ENCODE measurements at regions of chr11 and their contacts with region 1.

Region 1: GRCh38 chr11:76919887-76920746 is 59.4 kb downstream of the ACER3 start:
- DNase-seq: peak; percentile 64
- H3K4me3 ChIP-seq: peak overlapping the region in 1 of 3 experiments; percentile 2
- H3K27ac ChIP-seq: no peak overlapping the region
- H3K4me1 ChIP-seq: no peaks in the 10 kb centered on the region
- H3K27me3 ChIP-seq: no peaks in the 10 kb centered on the region
- CTCF ChIP-seq: peak; percentile 89 to 92

Region 2: DNA sequence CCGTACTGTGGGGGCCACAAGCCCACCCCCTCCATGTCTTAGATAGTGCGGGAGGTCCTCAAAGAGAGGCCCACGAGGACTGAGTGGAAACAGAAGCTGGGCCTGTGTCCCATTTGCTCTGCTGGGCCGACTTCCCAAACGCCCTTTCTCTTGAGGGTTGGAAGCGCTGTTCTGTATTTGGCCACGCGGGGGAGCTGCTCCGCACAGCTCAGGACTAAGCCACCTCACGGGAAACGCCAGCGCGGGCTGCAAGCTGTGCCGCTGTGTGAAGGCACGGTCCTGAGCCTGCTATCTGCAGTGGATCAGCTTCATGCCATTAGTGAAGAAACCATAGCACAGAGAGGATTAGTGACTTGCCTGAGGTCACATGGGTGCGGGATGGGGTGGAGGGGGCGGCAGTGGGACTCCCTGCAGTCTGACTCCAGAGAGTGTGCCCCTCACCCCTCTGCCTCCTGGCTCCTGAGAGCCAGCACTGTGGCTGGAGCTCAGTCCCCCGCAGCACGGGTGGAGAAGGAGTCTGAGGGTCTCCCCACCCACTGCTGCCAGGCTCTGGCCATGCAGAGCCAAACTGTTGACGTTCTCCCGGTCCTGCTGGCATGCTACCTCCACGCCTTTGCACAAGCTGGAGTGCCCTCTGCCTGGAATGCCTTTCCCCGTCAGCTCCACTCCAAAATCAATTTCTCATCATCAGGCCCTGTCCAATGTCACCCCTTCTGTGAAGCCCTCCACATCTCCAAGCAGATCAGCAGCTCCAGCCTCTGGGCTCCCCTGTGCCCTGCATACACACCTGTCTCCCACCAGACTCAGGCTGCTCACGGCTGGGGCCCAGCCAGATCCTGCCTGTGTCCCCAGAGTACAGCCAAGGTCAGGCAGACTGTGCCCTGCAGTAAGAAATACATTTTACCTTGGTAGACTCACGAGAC is 198.1 kb before region 1 on chr11:
- CTCF ChIA-PET with region 1: no interaction called
- dilution Hi-C with region 1: no loop called
- in situ Hi-C with region 1: loop called in 1 of 2 experiments (anchors 10 kb)
- intact Hi-C with region 1: no loop called
- DNase-seq: peak; percentile 57
- H3K4me3 ChIP-seq: no peak overlapping the region
- H3K27ac ChIP-seq: no peak overlapping the region
- H3K4me1 ChIP-seq: no peaks in the 10 kb centered on the region
- H3K27me3 ChIP-seq: peaks cover 2% of the 10 kb centered on the region
- CTCF ChIP-seq: peak; percentile 80 to 95

Region 3: GRCh38 chr11:76734456-76735420 is 185.4 kb before region 1 on chr11:
- CTCF ChIA-PET with region 1: interaction called, 7 read pairs
- dilution Hi-C with region 1: no loop called
- in situ Hi-C with region 1: loop called in 1 of 2 experiments (anchors 10 kb)
- intact Hi-C with region 1: loop called (anchors 1 kb)
- DNase-seq: no peak
- H3K4me3 ChIP-seq: no peak overlapping the region
- H3K27ac ChIP-seq: no peak overlapping the region
- H3K4me1 ChIP-seq: no peaks in the 10 kb centered on the region
- H3K27me3 ChIP-seq: no peaks in the 10 kb centered on the region
- CTCF ChIP-seq: no peak

Region 4: GRCh38 chr11:76799066-76799804 is 120.9 kb before region 1 on chr11:
- CTCF ChIA-PET with region 1: interaction called, 4 read pairs
- dilution Hi-C with region 1: loop called (anchors 5 kb)
- in situ Hi-C with region 1: no loop called
- intact Hi-C with region 1: no loop called
- DNase-seq: peak; percentile 47
- H3K4me3 ChIP-seq: no peak overlapping the region
- H3K27ac ChIP-seq: no peak overlapping the region
- H3K4me1 ChIP-seq: peaks cover 14% of the 10 kb centered on the region
- H3K27me3 ChIP-seq: no peaks in the 10 kb centered on the region
- CTCF ChIP-seq: peak; percentile 65 to 93

Region 5: DNA sequence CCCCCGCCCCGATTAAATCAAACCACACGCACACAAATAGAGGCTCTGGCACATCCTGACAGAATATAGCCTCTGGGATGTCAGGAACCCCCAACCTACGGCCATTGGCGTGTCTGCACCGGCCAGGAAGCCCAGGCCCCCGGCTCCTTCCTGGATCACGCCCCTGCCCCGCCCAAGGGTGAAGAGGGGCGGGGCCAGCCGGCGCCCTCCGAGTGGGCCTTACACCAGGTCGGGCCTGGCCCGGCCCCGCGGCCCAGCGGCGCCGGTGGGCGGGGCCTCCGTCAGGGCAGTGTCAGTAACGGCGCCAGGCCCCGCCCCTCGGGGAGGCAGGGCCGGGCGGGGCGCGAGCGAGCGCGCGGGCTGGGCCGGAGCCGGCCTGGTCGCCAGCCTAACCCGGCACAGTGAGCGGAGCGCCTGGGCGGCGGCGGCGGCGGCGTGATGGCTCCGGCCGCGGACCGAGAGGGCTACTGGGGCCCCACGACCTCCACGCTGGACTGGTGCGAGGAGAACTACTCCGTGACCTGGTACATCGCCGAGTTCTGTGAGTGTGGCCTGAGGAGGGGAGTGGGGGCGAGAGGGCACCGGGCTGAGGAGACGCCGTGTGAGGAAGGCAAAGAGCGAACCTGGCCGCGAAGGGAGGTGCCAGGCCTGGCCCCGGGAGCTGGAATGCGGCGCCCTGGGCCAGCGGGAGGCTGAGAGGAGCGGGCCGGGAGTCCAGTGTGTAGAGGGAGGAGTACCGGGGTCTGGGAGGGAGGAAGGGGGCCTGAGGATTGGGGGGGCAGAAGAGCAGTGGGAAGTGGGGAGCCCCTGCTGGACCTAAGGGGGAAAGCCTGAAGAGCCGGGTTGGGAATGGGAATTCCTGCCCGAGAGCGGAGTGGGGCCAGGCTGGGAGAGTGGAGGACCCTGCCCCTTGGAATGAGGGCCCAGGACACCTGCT is 59.3 kb before region 1 on chr11 and contains the start of gene ACER3:
- CTCF ChIA-PET with region 1: no interaction called
- dilution Hi-C with region 1: no loop called
- in situ Hi-C with region 1: no loop called
- intact Hi-C with region 1: loop called (anchors 2 kb)
- DNase-seq: peak; percentile 87
- H3K4me3 ChIP-seq: peak within 1 kb of the TSS; percentile 54 to 84 (median 74)
- H3K27ac ChIP-seq: peak within 1 kb of the TSS; percentile 51
- H3K4me1 ChIP-seq: peaks cover 10% of the 10 kb centered on the region
- H3K27me3 ChIP-seq: no peaks in the 10 kb centered on the region
- CTCF ChIP-seq: peak in 1 of 2 donors; percentile 39
- total RNA-seq, gene ACER3: 21.8 to 46.0 TPM

Region 6: GRCh38 chr11:76997512-76997911 is 77.4 kb after region 1 on chr11:
- CTCF ChIA-PET with region 1: no interaction called
- dilution Hi-C with region 1: no loop called
- in situ Hi-C with region 1: no loop called
- intact Hi-C with region 1: no loop called
- DNase-seq: no peak
- H3K4me3 ChIP-seq: no peak overlapping the region
- H3K27ac ChIP-seq: no peak overlapping the region
- H3K4me1 ChIP-seq: no peaks in the 10 kb centered on the region
- H3K27me3 ChIP-seq: no peaks in the 10 kb centered on the region
- CTCF ChIP-seq: no peak

Region 7: GRCh38 chr11:77091146-77091940 is 171.2 kb after region 1 on chr11:
- CTCF ChIA-PET with region 1: interaction called, 6 read pairs
- dilution Hi-C with region 1: no loop called
- in situ Hi-C with region 1: no loop called
- intact Hi-C with region 1: loop called (anchors 1 kb)
- DNase-seq: peak; percentile 64
- H3K4me3 ChIP-seq: no peak overlapping the region
- H3K27ac ChIP-seq: no peak overlapping the region
- H3K4me1 ChIP-seq: no peaks in the 10 kb centered on the region
- H3K27me3 ChIP-seq: no peaks in the 10 kb centered on the region
- CTCF ChIP-seq: peak; percentile 96 to 98

Region 8: DNA sequence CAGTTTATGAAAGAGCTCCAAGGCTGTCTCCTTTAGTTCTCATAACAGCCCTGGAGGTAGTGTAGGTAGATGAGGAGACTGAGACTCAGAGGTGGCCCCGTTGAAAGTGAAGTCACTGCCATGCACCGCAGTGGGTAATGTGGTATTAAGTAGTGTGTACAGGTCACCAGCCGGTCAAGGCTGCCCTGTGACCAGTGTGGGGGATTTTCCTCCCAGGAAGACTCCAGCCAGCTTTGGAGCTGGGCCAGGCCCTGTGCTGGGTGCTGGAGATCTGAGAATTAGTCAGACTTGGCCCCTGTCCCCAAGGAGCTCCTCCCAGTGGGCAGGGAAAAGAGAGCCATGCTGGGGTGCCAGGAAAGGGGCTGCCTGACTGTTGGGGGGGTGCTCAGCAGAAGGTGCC is 187.8 kb after region 1 on chr11:
- CTCF ChIA-PET with region 1: no interaction called
- dilution Hi-C with region 1: no loop called
- in situ Hi-C with region 1: no loop called
- intact Hi-C with region 1: loop called (anchors 5 kb)
- DNase-seq: peak; percentile 77
- H3K4me3 ChIP-seq: no peak overlapping the region
- H3K27ac ChIP-seq: no peak overlapping the region
- H3K4me1 ChIP-seq: no peaks in the 10 kb centered on the region
- H3K27me3 ChIP-seq: peaks cover 3% of the 10 kb centered on the region
- CTCF ChIP-seq: no peak